Caco-2 (cell line): ENCODE measurements at regions of chr5 and their contacts with region 1.

Region 1: DNA sequence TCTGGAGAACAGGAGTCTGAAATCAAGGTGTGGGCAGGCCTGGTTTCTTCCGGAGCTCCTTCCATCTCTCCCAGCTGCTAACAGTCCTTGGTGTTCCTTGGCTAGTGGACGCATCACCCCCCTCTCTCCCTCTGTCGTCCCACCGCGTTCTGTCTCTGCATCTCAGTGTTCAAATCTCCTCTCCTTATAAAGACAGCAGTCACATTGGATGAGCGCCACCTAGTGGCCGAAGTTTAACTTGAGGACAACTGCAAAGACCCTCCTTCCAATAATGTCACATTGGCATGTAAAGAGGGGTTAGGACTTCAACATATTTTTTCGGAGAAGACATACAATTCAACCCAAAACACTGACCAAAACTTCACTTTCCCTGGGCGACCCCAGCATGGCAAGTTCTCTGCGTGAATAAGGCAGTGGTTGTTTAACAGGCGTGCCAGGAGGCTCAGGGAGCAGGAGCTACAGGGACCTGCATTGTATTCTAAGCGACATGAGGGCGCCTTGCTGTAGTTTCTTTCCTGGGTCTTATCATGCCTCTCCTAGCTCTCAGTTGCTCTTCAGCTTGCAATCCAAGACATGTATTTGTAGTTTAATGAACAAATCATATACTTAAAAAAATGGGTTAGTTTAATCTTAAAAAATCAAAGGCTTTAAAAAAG is 27.9 kb upstream of the BASP1 start:
- DNase-seq: peak; percentile 78 to 81
- H3K4me3 ChIP-seq: no peak overlapping the region
- H3K4me3 Mint-ChIP-seq: no peak overlapping the region
- H3K27ac Mint-ChIP-seq: peak overlapping the region; percentile 65
- H3K4me1 ChIP-seq: peaks cover 21% of the 10 kb centered on the region
- H3K4me1 Mint-ChIP-seq: peaks cover 28% of the 10 kb centered on the region
- H3K27me3 ChIP-seq: no peaks in the 10 kb centered on the region
- H3K27me3 Mint-ChIP-seq: no peaks in the 10 kb centered on the region
- CTCF ChIP-seq: peak; percentile 77 to 92

Region 2: GRCh38 chr5:16736158-16736995 is 453.1 kb before region 1 on chr5:
- CTCF ChIA-PET with region 1: no interaction called
- POLR2A ChIA-PET with region 1: no interaction called
- intact Hi-C with region 1: loop called (anchors 5 kb)
- DNase-seq: peak; percentile 72 to 81
- H3K4me3 ChIP-seq: no peak overlapping the region
- H3K4me3 Mint-ChIP-seq: peak overlapping the region; percentile 12
- H3K27ac Mint-ChIP-seq: peak overlapping the region; percentile 91
- H3K4me1 ChIP-seq: peaks cover 20% of the 10 kb centered on the region
- H3K4me1 Mint-ChIP-seq: peaks cover 31% of the 10 kb centered on the region
- H3K27me3 ChIP-seq: no peaks in the 10 kb centered on the region
- H3K27me3 Mint-ChIP-seq: no peaks in the 10 kb centered on the region
- CTCF ChIP-seq: no peak

Region 3: DNA sequence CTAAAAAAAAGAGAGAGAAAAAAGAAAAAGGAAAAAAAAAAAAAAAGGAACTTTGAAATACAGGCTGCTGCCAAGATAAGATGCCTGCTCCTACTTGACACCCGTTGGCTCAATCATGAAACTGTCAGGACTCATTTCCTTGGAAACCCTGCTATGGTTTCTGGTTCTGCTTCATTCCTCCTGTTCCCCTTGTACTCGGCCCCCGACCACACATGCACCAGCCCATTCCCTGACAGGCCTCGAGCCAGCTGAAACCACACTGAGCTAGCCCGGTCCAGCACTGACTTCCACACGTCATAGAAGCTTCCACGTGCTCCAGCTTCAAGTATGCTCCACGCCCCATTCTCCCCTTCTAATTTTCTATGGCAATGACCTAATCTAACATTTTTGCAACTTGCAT is 346.6 kb before region 1 on chr5:
- CTCF ChIA-PET with region 1: interaction called, 3 read pairs
- POLR2A ChIA-PET with region 1: no interaction called
- intact Hi-C with region 1: loop called (anchors 1 kb)
- DNase-seq: no peak
- H3K4me3 ChIP-seq: no peak overlapping the region
- H3K4me3 Mint-ChIP-seq: no peak overlapping the region
- H3K27ac Mint-ChIP-seq: no peak overlapping the region
- H3K4me1 ChIP-seq: no peaks in the 10 kb centered on the region
- H3K4me1 Mint-ChIP-seq: peaks cover 17% of the 10 kb centered on the region
- H3K27me3 ChIP-seq: no peaks in the 10 kb centered on the region
- H3K27me3 Mint-ChIP-seq: no peaks in the 10 kb centered on the region
- CTCF ChIP-seq: no peak

Region 4: GRCh38 chr5:17087035-17087434 is 102.5 kb before region 1 on chr5:
- CTCF ChIA-PET with region 1: no interaction called
- POLR2A ChIA-PET with region 1: no interaction called
- intact Hi-C with region 1: no loop called
- DNase-seq: no peak
- H3K4me3 ChIP-seq: no peak overlapping the region
- H3K4me3 Mint-ChIP-seq: no peak overlapping the region
- H3K27ac Mint-ChIP-seq: no peak overlapping the region
- H3K4me1 ChIP-seq: no peaks in the 10 kb centered on the region
- H3K4me1 Mint-ChIP-seq: no peaks in the 10 kb centered on the region
- H3K27me3 ChIP-seq: no peaks in the 10 kb centered on the region
- H3K27me3 Mint-ChIP-seq: no peaks in the 10 kb centered on the region
- CTCF ChIP-seq: no peak

Region 5: DNA sequence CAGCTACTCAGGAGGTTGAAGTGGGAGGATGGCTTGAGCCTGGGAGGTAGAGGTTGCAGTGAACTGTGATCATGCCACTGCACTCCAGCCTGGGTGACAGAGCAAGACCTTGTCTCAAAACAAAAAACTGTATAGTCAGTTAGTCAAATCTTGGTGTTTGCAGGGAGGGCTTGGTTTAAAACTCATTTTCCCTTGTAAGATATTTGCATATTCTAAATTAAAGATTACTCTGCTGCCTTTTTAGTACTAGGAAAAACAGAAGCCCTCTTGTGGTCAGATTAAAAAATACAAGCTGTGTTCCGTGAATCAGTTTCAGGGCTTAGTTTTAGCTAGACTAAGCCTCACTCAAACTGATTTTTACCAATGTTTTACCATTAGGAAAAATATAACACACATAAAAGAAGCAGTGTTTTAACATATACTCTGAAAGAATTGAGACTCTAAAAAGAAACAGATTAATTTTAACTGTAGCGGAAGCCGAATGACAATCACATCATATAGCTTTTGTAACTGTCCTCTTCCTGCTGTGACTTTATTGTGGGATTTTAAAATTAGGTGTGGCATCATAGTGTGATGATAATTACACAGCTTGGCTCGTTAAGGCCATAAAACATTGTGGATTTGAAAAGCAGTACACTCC is 56.9 kb before region 1 on chr5:
- CTCF ChIA-PET with region 1: interaction called, 11 read pairs
- POLR2A ChIA-PET with region 1: no interaction called
- intact Hi-C with region 1: loop called (anchors 1 kb)
- DNase-seq: peak in 1 of 2 experiments; percentile 45
- H3K4me3 ChIP-seq: no peak overlapping the region
- H3K4me3 Mint-ChIP-seq: no peak overlapping the region
- H3K27ac Mint-ChIP-seq: no peak overlapping the region
- H3K4me1 ChIP-seq: no peaks in the 10 kb centered on the region
- H3K4me1 Mint-ChIP-seq: peaks cover 9% of the 10 kb centered on the region
- H3K27me3 ChIP-seq: no peaks in the 10 kb centered on the region
- H3K27me3 Mint-ChIP-seq: no peaks in the 10 kb centered on the region
- CTCF ChIP-seq: peak; percentile 49 to 76